Caco-2 (cell line): ENCODE measurements at regions of chr16 and their contacts with region 1.

Region 1: DNA sequence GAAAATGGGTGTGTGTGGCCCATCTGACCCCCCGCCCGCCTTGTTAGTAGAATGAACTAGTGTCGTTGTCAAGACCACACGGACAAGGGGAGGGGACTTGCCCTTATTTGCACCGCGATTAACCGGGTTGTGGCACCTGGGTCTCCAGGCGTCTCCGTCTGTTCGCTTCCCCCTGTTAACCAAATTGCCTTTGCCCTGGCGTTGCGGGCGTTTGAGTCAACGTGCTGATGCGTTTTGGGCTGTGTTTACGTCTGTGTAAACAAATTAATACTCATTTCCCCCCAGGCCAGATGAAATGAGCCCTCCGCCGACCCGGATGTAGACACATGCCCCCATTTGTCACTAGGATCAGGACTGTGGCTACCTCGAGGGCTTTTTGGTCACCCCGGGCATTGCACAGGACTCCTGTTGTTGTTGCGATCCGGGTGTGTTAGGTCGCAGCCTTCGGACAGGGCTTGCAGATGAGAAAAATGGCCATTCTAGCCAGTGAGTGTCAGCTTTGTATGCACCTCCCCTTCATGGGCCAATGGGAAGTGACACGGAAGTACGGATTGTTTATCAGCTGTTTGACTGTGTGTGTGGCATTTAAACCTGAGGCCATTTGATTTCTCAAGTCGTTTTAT is 906 bp downstream of the RBL2 start:
- DNase-seq: peak; percentile 85 to 88
- H3K4me3 ChIP-seq: peak overlapping the region; percentile 99
- H3K4me3 Mint-ChIP-seq: peak overlapping the region; percentile 99
- H3K27ac Mint-ChIP-seq: peak overlapping the region; percentile 96
- H3K4me1 ChIP-seq: peaks cover 17% of the 10 kb centered on the region
- H3K4me1 Mint-ChIP-seq: peaks cover 18% of the 10 kb centered on the region
- H3K27me3 ChIP-seq: no peaks in the 10 kb centered on the region
- H3K27me3 Mint-ChIP-seq: no peaks in the 10 kb centered on the region
- CTCF ChIP-seq: no peak

Region 2: GRCh38 chr16:53147500-53148065 is 287.6 kb before region 1 on chr16:
- CTCF ChIA-PET with region 1: no interaction called
- POLR2A ChIA-PET with region 1: no interaction called
- intact Hi-C with region 1: no loop called
- DNase-seq: no peak
- H3K4me3 ChIP-seq: no peak overlapping the region
- H3K4me3 Mint-ChIP-seq: no peak overlapping the region
- H3K27ac Mint-ChIP-seq: no peak overlapping the region
- H3K4me1 ChIP-seq: peaks cover 4% of the 10 kb centered on the region
- H3K4me1 Mint-ChIP-seq: no peaks in the 10 kb centered on the region
- H3K27me3 ChIP-seq: no peaks in the 10 kb centered on the region
- H3K27me3 Mint-ChIP-seq: no peaks in the 10 kb centered on the region
- CTCF ChIP-seq: no peak

Region 3: GRCh38 chr16:53323924-53324323 is 111.3 kb before region 1 on chr16:
- CTCF ChIA-PET with region 1: no interaction called
- POLR2A ChIA-PET with region 1: no interaction called
- intact Hi-C with region 1: no loop called
- DNase-seq: no peak
- H3K4me3 ChIP-seq: no peak overlapping the region
- H3K4me3 Mint-ChIP-seq: no peak overlapping the region
- H3K27ac Mint-ChIP-seq: no peak overlapping the region
- H3K4me1 ChIP-seq: no peaks in the 10 kb centered on the region
- H3K4me1 Mint-ChIP-seq: no peaks in the 10 kb centered on the region
- H3K27me3 ChIP-seq: no peaks in the 10 kb centered on the region
- H3K27me3 Mint-ChIP-seq: no peaks in the 10 kb centered on the region
- CTCF ChIP-seq: no peak

Region 4: GRCh38 chr16:53372992-53373871 is 61.9 kb before region 1 on chr16:
- CTCF ChIA-PET with region 1: no interaction called
- POLR2A ChIA-PET with region 1: no interaction called
- intact Hi-C with region 1: loop called (anchors 1 kb)
- DNase-seq: peak; percentile 90 to 92
- H3K4me3 ChIP-seq: peak overlapping the region; percentile 56
- H3K4me3 Mint-ChIP-seq: no peak overlapping the region
- H3K27ac Mint-ChIP-seq: peak overlapping the region; percentile 78
- H3K4me1 ChIP-seq: no peaks in the 10 kb centered on the region
- H3K4me1 Mint-ChIP-seq: no peaks in the 10 kb centered on the region
- H3K27me3 ChIP-seq: no peaks in the 10 kb centered on the region
- H3K27me3 Mint-ChIP-seq: no peaks in the 10 kb centered on the region
- CTCF ChIP-seq: peak in 1 of 2 experiments; percentile 14

Region 5: DNA sequence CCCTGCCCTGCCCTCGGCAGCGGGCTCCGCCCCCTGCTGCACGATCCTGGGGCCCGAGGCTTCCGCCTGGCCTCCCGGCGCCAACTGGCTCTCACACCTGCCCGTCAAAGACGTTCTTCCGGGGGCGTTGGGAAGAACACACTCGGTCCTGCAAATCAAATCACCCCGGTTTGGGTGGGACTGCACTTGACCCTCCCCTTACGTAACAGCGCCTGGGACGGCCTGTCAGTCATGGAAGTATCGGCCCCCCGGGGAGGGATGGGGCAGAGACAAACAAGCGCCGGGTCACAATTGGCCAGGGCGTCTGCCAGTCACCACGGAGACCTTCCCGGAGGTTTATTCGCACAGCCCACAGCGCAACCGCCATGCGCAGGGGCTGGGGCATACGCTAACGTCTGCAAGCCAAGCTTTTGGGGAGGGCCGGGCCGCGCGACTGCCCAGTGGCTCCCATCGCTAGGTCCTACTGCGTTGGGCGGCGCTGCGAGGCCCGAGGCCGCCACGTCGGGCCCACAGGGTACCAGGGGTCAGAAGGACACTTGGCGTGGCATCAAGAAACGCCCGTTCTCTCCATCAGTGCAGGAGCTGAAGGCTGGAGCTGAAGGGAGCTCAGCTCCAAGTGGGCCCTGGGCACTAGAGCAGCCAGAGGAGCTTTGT is 68.2 kb after region 1 on chr16:
- CTCF ChIA-PET with region 1: no interaction called
- POLR2A ChIA-PET with region 1: interaction called, 7 read pairs
- intact Hi-C with region 1: loop called (anchors 2 kb)
- DNase-seq: peak; percentile 100
- H3K4me3 ChIP-seq: peak overlapping the region; percentile 89
- H3K4me3 Mint-ChIP-seq: peak overlapping the region; percentile 93
- H3K27ac Mint-ChIP-seq: peak overlapping the region; percentile 93
- H3K4me1 ChIP-seq: peaks cover 24% of the 10 kb centered on the region
- H3K4me1 Mint-ChIP-seq: peaks cover 27% of the 10 kb centered on the region
- H3K27me3 ChIP-seq: no peaks in the 10 kb centered on the region
- H3K27me3 Mint-ChIP-seq: no peaks in the 10 kb centered on the region
- CTCF ChIP-seq: no peak

Region 6: DNA sequence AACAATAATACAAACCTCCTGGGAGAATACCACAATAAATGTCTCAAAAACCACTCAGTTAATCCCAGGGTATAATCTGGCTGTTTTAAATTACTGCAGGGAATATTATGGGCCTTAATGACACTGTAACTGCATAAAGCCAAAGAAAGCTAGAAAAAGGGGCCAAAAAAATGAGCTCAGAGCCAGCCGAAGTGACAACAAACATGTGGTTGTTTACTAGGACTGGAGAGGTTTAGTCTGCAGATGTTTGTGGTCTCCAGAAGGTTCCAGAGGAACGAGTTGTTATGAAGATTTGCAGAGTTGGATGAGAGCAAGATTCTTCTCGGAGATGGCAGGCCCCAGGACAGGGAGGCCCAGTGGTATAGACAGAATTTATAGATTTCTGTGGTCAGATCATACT is 164.9 kb after region 1 on chr16:
- CTCF ChIA-PET with region 1: no interaction called
- POLR2A ChIA-PET with region 1: no interaction called
- intact Hi-C with region 1: no loop called
- DNase-seq: no peak
- H3K4me3 ChIP-seq: no peak overlapping the region
- H3K4me3 Mint-ChIP-seq: no peak overlapping the region
- H3K27ac Mint-ChIP-seq: no peak overlapping the region
- H3K4me1 ChIP-seq: no peaks in the 10 kb centered on the region
- H3K4me1 Mint-ChIP-seq: no peaks in the 10 kb centered on the region
- H3K27me3 ChIP-seq: no peaks in the 10 kb centered on the region
- H3K27me3 Mint-ChIP-seq: no peaks in the 10 kb centered on the region
- CTCF ChIP-seq: no peak